ENCODE measurements at regions of chr5 and their contacts with region 1.

Region 1: GRCh38 chr5:133111299-133111698 is 59.5 kb downstream of the HSPA4 start:
- DNase-seq: peak; percentile 82
- ATAC-seq: peak; percentile 77

Region 2: DNA sequence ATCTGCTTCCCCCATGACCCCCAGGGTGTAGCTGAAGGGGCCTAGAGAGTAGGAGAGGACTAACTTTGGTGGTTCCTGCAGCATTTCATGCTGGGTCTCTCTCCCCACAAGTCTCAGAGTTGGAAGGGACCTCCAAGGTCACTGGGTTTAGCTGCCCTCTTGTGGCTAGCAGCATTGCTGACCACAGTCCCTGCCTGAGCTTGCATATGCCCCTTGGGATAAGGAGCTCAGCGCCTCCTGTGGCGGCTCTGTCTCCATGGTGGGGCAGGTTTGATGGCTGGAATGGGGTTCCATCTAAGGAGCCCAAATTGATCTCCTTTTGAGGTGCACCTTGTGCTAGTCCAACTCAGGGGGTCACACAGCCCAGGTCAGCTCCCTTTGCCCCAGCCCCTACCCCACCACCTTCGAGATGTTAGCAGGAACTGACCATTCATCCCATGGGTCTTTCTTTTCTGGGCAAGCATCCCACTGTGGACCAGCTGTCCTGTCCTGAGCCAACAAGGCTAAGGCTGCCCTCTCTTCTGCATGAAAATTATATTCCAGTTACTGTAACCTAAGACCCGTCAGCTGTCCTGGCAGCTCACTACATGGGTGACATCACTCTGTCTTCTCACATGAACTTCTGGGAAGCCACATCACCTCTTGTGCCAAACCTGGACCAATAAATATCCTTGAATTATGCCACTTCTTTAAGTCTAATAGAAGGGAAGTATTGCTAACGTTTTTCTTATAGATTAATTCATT is 136.8 kb after region 1 on chr5:
- intact Hi-C with region 1: loop called (anchors 5 kb)
- DNase-seq: no peak
- ATAC-seq: no peak

Region 3: DNA sequence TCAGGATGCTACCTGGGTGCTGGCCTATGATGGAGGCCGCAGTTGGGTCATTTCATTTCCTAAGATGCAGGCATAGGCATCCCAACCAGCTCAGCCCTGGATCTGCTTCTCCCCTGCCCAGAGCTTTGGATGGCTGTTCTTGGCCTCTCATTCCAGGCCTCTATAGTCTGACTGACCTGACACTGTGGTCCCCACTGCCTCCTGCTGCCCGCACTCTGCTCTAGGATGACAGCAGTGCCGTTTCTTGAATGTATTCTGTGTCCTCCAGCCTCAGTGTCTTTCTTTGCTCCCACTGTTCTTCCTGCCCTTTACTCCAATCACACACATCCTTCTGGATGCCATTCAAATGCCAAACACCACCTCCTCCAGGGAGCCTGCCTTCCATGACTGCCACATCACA is 176.2 kb after region 1 on chr5:
- intact Hi-C with region 1: loop called (anchors 5 kb)
- DNase-seq: no peak
- ATAC-seq: no peak

Region 4: DNA sequence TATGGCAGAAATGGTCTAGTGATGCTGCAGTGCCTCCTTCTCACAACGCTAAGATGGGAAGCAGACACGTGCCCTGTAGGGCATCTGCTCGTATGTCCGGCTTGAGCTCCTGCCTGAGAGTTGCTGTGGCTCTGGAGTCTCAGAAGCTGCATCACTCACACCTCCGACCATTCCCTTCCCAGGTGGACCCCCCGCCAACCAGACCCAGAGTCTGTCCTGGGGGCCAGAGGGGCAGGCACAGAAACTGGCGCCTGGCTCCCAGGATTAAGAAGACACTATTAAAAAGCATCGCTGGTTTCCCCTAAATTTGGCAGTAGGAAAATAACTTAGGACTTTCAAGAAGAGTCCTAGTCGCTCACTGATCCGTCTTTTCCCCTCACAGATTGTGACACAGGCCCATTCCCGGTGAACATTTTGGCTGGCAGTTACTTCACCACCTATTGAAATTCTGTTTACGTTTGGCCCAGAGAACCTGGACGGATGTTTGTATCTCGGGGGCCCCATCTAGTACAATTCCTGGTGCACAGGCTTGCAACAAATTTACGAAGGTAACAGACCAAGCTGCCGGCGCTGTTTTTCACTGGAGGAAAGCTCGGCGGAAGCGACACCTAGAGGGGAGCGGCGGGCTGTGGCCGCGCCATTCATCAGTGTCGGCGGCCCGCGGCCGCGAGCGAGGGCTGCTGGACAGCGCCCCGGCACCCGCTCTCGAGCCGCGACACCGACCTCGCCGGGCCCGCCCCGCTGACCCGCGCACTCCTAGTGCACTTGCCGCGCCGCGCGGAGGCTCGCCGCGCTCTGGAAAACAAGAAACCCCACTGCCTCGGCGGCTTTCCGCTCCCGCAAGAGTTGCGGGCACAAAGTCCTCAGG is 499.4 kb after region 1 on chr5:
- intact Hi-C with region 1: loop called (anchors 10 kb)
- DNase-seq: peak; percentile 78
- ATAC-seq: peak; percentile 94

Region 5: GRCh38 chr5:134038138-134038537 is 926.8 kb after region 1 on chr5:
- intact Hi-C with region 1: loop called (anchors 5 kb)
- DNase-seq: no peak
- ATAC-seq: no peak